IMR-90 (cell line): ENCODE measurements at regions of chr13 and their contacts with region 1.

Region 1: DNA sequence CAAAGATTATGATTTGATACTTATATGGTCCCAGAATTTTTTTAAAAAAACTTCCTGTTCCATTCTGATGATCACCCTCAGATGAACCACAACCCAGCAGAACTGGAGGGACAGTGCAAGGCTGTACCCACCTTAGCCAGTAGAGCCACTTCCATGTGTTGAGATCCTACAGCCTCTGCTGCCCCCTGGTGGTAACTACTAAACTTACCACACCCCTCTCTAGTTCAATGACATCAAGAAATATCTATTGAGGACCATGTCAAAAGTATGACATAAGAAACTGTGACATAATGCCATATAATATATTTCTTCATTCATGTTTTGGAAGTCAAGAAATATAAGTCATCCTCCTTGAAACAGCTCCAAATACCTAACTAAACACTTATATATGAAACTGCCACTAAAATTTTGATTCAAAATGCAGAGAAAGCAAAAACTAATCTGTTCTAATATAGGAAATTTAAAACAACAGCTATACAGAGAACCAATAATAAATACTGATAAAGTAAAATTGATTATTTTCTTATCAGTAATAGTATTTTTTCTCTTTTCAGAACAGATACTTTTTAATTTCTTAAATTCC is 412.6 kb downstream of the KCTD12 start:
- DNase-seq: peak; percentile 80
- ATAC-seq: peak; percentile 97
- H3K4me3 ChIP-seq: no peak overlapping the region
- H3K27ac ChIP-seq: no peak overlapping the region
- H3K4me1 ChIP-seq: peaks cover 1% of the 10 kb centered on the region; the same call in 1 of the 2 replicates
- H3K27me3 ChIP-seq: peaks cover 18% of the 10 kb centered on the region
- CTCF ChIP-seq: peak; percentile 87
- POLR2A ChIP-seq: 0 out of 2 replicates have a peak, but pooled peaks have one; percentile 44
- RAD21 ChIP-seq: peak; percentile 95

Region 2: DNA sequence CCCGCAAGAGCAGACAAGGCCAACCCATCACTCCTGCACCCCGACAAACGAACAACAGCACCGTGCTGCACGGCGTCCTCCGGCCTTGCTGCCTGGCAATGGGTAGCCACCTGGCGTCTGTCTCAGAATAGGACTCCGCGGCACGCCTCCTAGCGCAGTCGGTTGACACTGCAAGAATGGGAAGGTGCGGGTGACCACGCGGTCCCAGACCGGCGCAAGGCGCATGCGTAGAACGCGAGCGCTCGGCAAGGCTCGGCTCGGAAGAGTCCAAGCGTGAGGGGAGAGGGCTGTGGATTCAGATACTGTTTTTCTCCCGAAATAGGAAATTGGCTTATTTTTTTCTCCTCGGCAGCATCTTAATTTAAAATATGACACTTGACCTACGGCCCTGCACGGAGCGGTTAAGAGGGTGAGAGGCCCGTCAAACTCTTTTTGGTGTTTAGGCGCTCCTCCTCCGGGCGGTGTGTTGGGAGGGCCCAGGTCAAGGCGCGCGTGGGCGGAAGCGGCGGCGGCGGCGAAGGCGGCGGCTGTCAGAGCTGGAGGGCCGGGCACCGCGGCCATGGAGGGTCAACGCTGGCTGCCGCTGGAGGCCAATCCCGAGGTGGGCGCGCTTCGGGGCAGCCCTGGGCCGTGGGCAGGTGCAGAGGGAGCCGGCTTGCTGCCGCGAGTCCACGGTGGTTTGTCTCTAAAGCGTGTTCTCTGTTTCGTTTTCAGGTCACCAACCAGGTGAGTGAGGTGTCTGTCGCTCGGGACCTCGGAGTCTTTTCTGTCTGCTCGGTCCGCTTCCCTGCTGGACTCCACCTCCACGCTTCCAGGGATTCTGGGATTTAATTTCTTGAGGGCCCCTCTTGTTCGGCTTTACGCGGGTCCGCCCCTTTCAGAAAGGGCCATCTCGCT is 924.1 kb before region 1 on chr13 and contains the start of gene UCHL3:
- CTCF ChIA-PET with region 1: no interaction called
- POLR2A ChIA-PET with region 1: no interaction called
- dilution Hi-C with region 1: no loop called
- in situ Hi-C with region 1: loop called (anchors 25 kb)
- intact Hi-C with region 1: no loop called
- DNase-seq: peak; percentile 95
- ATAC-seq: peak; percentile 96
- H3K4me3 ChIP-seq: peak within 1 kb of the TSS; percentile 83
- H3K27ac ChIP-seq: peak within 1 kb of the TSS; percentile 94
- H3K4me1 ChIP-seq: peaks cover 2% of the 10 kb centered on the region; the same call in 1 of the 2 replicates
- H3K27me3 ChIP-seq: no peaks in the 10 kb centered on the region
- CTCF ChIP-seq: peak; percentile 98
- POLR2A ChIP-seq: no peak; the same call in 1 of the 2 replicates
- RAD21 ChIP-seq: peak; percentile 79
- total RNA-seq, gene UCHL3: 60.8 and 63.8 TPM in 2 replicates

Region 3: DNA sequence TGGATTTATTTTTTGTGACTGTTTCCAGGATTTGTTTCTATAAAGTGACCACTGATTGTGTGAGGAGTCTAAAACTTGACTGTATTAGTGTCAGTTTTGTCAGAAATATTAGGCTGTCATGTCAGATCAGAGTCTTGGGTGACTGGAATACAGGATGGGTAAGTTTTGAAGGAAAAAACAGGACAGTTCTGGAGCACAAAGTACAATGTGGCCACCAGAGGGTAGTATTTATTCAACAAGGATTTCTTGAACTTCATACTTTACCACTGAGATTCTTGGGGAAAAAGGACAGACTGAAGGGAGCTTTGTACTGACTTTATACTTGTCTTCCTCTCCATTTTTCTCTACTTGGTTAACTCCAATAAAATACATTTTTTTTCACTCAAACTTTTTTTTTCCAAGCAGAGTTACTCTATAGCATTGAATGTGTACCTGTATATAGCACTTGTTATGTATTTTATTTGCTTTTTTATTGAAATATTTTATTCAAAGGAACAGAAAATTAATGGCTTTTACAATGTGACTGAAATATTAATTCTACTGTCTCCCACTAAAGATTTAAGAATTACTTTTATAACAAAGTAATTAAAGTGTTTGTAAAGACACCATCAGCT is 786.4 kb before region 1 on chr13:
- CTCF ChIA-PET with region 1: no interaction called
- POLR2A ChIA-PET with region 1: no interaction called
- dilution Hi-C with region 1: no loop called
- in situ Hi-C with region 1: loop called (anchors 10 kb)
- intact Hi-C with region 1: loop called (anchors 5 kb)
- DNase-seq: peak; percentile 68
- ATAC-seq: peak; percentile 40
- H3K4me3 ChIP-seq: no peak overlapping the region
- H3K27ac ChIP-seq: no peak overlapping the region
- H3K4me1 ChIP-seq: peaks cover 21% of the 10 kb centered on the region
- H3K27me3 ChIP-seq: no peaks in the 10 kb centered on the region
- CTCF ChIP-seq: peak; percentile 59
- POLR2A ChIP-seq: no peak
- RAD21 ChIP-seq: peak; percentile 43

Region 4: GRCh38 chr13:75876360-75877050 is 597.1 kb before region 1 on chr13:
- CTCF ChIA-PET with region 1: interaction called, 12 read pairs
- POLR2A ChIA-PET with region 1: no interaction called
- dilution Hi-C with region 1: no loop called
- in situ Hi-C with region 1: loop called (anchors 5 kb)
- intact Hi-C with region 1: loop called (anchors 1 kb)
- DNase-seq: peak; percentile 73
- ATAC-seq: peak; percentile 81
- H3K4me3 ChIP-seq: no peak overlapping the region
- H3K27ac ChIP-seq: no peak overlapping the region; the same call in 1 of the 2 replicates
- H3K4me1 ChIP-seq: peaks cover 5% of the 10 kb centered on the region
- H3K27me3 ChIP-seq: peaks cover 4% of the 10 kb centered on the region
- CTCF ChIP-seq: peak; percentile 92
- POLR2A ChIP-seq: no peak
- RAD21 ChIP-seq: peak; percentile 93

Region 5: GRCh38 chr13:76000131-76000530 is 473.5 kb before region 1 on chr13:
- CTCF ChIA-PET with region 1: no interaction called
- POLR2A ChIA-PET with region 1: no interaction called
- dilution Hi-C with region 1: no loop called
- in situ Hi-C with region 1: no loop called
- intact Hi-C with region 1: no loop called
- DNase-seq: no peak
- ATAC-seq: no peak
- H3K4me3 ChIP-seq: no peak overlapping the region
- H3K27ac ChIP-seq: no peak overlapping the region
- H3K4me1 ChIP-seq: no peaks in the 10 kb centered on the region
- H3K27me3 ChIP-seq: no peaks in the 10 kb centered on the region; the same call in 1 of the 2 replicates
- CTCF ChIP-seq: no peak
- POLR2A ChIP-seq: no peak
- RAD21 ChIP-seq: no peak

Region 6: GRCh38 chr13:76225815-76226489 is 247.7 kb before region 1 on chr13:
- CTCF ChIA-PET with region 1: no interaction called
- POLR2A ChIA-PET with region 1: no interaction called
- dilution Hi-C with region 1: no loop called
- in situ Hi-C with region 1: no loop called
- intact Hi-C with region 1: loop called (anchors 1 kb)
- DNase-seq: peak; percentile 90
- ATAC-seq: peak; percentile 83
- H3K4me3 ChIP-seq: no peak overlapping the region
- H3K27ac ChIP-seq: peak overlapping the region; percentile 51; the same call in 1 of the 2 replicates
- H3K4me1 ChIP-seq: peaks cover 4% of the 10 kb centered on the region; the same call in 1 of the 2 replicates
- H3K27me3 ChIP-seq: no peaks in the 10 kb centered on the region
- CTCF ChIP-seq: no peak
- POLR2A ChIP-seq: no peak
- RAD21 ChIP-seq: no peak

Region 7: DNA sequence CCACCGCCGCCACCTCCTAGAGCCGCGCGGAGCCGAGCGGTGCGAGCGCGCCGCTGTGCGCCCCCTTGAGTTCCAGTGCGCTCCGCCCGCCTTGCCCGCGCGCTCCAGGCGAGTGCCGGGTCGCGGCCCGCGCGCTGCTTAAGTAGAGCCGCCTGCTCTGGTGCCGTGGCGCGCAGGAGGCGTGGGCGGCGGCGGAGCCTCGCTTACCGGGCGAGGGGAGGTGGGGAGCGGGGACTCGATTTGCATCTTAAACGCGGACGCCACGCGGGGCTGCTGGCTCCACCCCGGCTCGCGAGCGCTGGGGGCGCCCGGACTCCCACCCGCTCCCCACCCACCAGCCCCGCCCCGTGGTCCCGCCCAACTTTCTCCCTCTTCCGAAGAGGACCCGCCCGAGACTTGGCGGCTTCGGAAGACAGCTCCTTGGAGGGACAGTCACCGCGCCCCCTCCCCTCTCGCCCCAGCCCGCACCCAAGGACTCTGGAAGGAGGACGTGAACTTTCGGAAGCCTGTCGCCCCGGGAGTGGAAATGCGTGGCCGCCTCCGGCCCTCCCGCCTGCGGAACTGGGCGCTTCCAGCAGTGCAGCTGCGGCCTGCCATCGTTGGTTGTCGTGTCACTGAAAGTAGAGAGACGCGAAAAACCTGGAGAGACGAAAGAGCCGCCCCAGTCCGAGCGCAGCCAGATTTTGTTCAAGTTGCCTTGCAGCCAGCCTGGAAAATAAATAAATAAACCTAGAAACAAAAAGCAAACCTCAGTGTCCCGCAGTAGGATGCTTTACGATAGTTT is 412.8 kb after region 1 on chr13 and contains the start of gene KCTD12:
- CTCF ChIA-PET with region 1: no interaction called
- POLR2A ChIA-PET with region 1: no interaction called
- dilution Hi-C with region 1: no loop called
- in situ Hi-C with region 1: no loop called
- intact Hi-C with region 1: loop called (anchors 5 kb)
- DNase-seq: peak; percentile 73
- ATAC-seq: peak; percentile 82
- H3K4me3 ChIP-seq: peak within 1 kb of the TSS; percentile 67
- H3K27ac ChIP-seq: peak within 1 kb of the TSS; percentile 69
- H3K4me1 ChIP-seq: peaks cover 4% of the 10 kb centered on the region; the same call in 1 of the 2 replicates
- H3K27me3 ChIP-seq: no peaks in the 10 kb centered on the region
- CTCF ChIP-seq: peak; percentile 41
- POLR2A ChIP-seq: no peak
- RAD21 ChIP-seq: 0 out of 2 replicates have a peak, but pooled peaks have one; percentile 12
- total RNA-seq, gene KCTD12: 1.8 and 3.9 TPM in 2 replicates